ENCODE measurements at regions of chr9 and their contacts with region 1.

Region 1: DNA sequence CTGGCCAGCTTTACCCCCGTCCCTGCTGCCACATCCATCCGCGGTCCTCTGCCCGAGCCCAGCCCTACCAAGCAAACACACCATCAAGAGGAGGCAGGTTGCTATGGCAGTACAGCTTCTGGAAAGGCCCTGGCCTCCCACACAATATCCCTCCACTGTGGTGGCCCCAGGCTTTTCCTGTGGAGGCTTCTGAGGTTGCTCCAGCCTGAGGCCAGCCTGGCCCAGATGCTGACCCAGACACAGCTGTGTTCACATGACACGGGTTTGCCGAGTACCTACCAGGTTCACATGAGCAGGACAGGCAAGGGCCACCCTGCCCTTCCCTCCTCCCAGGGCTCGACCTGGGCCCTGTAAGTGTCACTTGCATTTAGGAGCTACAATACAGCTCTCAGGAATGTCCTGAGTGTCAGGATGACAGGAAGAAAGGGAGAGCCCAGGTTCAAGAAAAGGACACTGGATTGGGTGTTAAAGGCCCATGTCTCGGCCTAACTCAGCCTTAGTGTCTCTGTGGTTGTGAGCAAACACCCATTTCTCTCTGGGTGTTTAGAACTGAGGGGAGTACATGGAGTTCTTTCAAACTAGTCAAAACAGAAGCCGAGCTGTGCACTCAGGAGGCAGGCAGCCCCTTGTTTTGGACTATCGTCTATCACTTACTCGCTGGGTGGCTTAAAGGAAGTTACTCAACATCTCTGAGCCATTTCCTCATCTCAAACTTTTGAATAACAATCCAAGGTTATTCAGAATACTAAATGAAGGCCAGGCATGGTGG is 40.2 kb downstream of the NAIF1 start:
- DNase-seq: peak in 4 of 5 donors; percentile 50 to 75 (median 54)
- H3K4me3 ChIP-seq: peak overlapping the region; percentile 0 to 25
- H3K4me3 Mint-ChIP-seq: peak overlapping the region; percentile 74 to 89 (median 82)
- H3K27ac ChIP-seq: peak overlapping the region; percentile 80
- H3K27ac Mint-ChIP-seq: peak overlapping the region; percentile 98 to 100 (median 99)
- H3K4me1 ChIP-seq: peaks cover 100% of the 10 kb centered on the region
- H3K4me1 Mint-ChIP-seq: peaks cover 54 to 94% (median 78%) of the 10 kb centered on the region in 4 donors
- H3K27me3 ChIP-seq: no peaks in the 10 kb centered on the region
- H3K27me3 Mint-ChIP-seq: no peaks in the 10 kb centered on the region

Region 2: DNA sequence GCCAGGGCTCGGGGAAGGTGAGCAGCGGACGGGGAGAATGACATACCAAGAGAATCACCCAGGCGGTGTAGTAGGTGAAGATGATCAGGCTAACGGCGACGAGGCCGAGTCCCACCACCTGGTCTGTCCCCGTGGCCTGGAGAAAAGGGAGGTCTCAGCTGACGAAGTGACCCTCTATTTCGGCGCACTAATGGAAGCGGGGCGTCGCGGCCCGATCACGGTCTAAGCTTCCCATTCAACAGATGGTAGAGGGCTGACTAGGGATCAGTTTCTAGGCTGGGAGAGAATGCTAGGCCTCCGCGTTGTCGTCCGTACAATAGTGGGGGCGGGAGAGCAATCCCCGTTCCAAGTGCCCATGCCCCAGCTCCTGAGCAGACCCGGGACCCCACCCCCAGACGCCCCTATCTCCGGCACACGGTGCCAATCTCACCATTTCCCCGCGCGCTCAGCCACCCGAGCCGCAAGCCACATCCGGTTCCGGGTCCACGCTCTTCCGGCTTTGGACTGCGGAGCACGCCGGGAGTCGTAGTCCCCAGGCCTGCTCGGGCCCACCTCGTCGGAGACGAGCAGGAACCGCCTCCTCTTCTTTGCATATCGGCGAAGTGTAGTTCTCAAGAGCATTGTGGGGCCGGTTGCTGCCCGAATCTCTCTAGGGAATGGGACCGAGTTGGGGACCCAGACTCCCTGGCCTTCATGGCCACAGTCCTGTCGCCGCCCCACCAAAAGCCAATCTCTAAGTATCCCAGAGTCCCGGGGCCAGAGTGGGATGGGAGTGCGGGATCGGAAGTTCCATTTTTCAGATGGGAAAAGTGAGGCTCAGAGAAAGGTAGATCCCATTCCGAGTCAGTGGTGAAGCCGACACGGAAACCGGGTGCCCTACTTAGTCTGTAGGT is 89.3 kb before region 1 on chr9 and contains the start of gene DPM2:
- CTCF ChIA-PET with region 1: interaction called, 216 read pairs
- POLR2A ChIA-PET with region 1: interaction called, 130 read pairs
- intact Hi-C with region 1: no loop called
- DNase-seq: peak; percentile 85 to 89 (median 87)
- H3K4me3 ChIP-seq: peak within 1 kb of the TSS; percentile 37 to 73
- H3K4me3 Mint-ChIP-seq: peak within 1 kb of the TSS; percentile 88 to 98 (median 91)
- H3K27ac ChIP-seq: peak within 1 kb of the TSS; percentile 75
- H3K27ac Mint-ChIP-seq: peak within 1 kb of the TSS; percentile 89 to 97 (median 97)
- H3K4me1 ChIP-seq: peaks cover 37% of the 10 kb centered on the region
- H3K4me1 Mint-ChIP-seq: peaks cover 23 to 53% (median 41%) of the 10 kb centered on the region in 4 donors
- H3K27me3 ChIP-seq: no peaks in the 10 kb centered on the region
- H3K27me3 Mint-ChIP-seq: no peaks in the 10 kb centered on the region
- total RNA-seq, gene DPM2: 37.0 to 39.7 TPM

Region 3: GRCh38 chr9:127970401-127971313 is 56.3 kb before region 1 on chr9:
- CTCF ChIA-PET with region 1: interaction called, 182 read pairs
- POLR2A ChIA-PET with region 1: interaction called, 1,317 read pairs
- intact Hi-C with region 1: loop called (anchors 1 kb)
- DNase-seq: peak; percentile 72 to 89 (median 73)
- H3K4me3 ChIP-seq: peak overlapping the region; percentile 61 to 76
- H3K4me3 Mint-ChIP-seq: peak overlapping the region; percentile 78 to 98 (median 93)
- H3K27ac ChIP-seq: peak overlapping the region; percentile 78
- H3K27ac Mint-ChIP-seq: peak overlapping the region; percentile 81 to 99 (median 97)
- H3K4me1 ChIP-seq: peaks cover 100% of the 10 kb centered on the region
- H3K4me1 Mint-ChIP-seq: peaks cover 73 to 100% (median 87%) of the 10 kb centered on the region in 4 donors
- H3K27me3 ChIP-seq: no peaks in the 10 kb centered on the region
- H3K27me3 Mint-ChIP-seq: no peaks in the 10 kb centered on the region

Region 4: DNA sequence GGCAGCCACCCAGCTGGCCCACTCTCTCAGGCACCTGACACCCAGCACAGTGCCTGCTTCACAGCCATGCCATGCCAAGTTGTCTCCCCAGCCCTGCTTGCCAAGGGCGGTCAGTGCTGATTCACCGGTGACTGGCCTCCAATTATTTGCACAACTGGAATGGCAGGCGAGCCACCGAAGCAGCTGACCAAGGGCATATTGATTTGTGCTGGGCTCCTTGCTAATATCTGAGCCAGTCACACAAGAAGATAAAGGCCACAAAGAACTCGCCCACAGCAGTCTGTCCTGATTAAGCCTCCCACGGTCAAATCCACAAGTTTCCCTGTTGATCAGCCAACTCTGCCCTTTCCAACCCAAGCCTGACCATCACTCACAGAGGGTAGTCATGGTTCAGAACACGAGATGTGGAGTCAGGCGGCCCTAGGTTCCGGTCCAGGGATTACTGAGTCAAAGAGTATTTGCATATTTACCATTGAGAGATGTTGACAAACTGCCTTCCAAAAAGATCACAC is 39.8 kb before region 1 on chr9:
- CTCF ChIA-PET with region 1: interaction called, 182 read pairs
- POLR2A ChIA-PET with region 1: interaction called, 1,317 read pairs
- intact Hi-C with region 1: no loop called
- DNase-seq: no peak
- H3K4me3 ChIP-seq: no peak overlapping the region
- H3K4me3 Mint-ChIP-seq: no peak overlapping the region
- H3K27ac ChIP-seq: no peak overlapping the region
- H3K27ac Mint-ChIP-seq: peak overlapping the region in 1 of 7 donors; percentile 31
- H3K4me1 ChIP-seq: peaks cover 27% of the 10 kb centered on the region
- H3K4me1 Mint-ChIP-seq: peaks cover 25 to 34% (median 30%) of the 10 kb centered on the region in 4 donors
- H3K27me3 ChIP-seq: no peaks in the 10 kb centered on the region
- H3K27me3 Mint-ChIP-seq: no peaks in the 10 kb centered on the region

Region 5: GRCh38 chr9:128007566-128008138 is 19.3 kb before region 1 on chr9:
- CTCF ChIA-PET with region 1: interaction called, 28 read pairs
- POLR2A ChIA-PET with region 1: interaction called, 313 read pairs
- intact Hi-C with region 1: loop called (anchors 1 kb)
- DNase-seq: peak; percentile 90 to 97 (median 92)
- H3K4me3 ChIP-seq: peak overlapping the region in 1 of 2 donors; percentile 29
- H3K4me3 Mint-ChIP-seq: peak overlapping the region; percentile 75 to 93 (median 82)
- H3K27ac ChIP-seq: peak overlapping the region; percentile 46
- H3K27ac Mint-ChIP-seq: peak overlapping the region; percentile 94 to 100 (median 97)
- H3K4me1 ChIP-seq: peaks cover 79% of the 10 kb centered on the region
- H3K4me1 Mint-ChIP-seq: peaks cover 33 to 90% (median 61%) of the 10 kb centered on the region in 4 donors
- H3K27me3 ChIP-seq: no peaks in the 10 kb centered on the region
- H3K27me3 Mint-ChIP-seq: no peaks in the 10 kb centered on the region

Measured in CD4-positive, alpha-beta memory T cell (primary cell).